B cell (primary cell): ENCODE measurements at regions of chr9 and their contacts with region 1.

Region 1: GRCh38 chr9:27394154-27394825 is 97.3 kb upstream of the EQTN start:
- DNase-seq: no peak
- ATAC-seq: no peak
- H3K4me3 ChIP-seq: no peak overlapping the region
- H3K4me3 Mint-ChIP-seq: no peak overlapping the region
- H3K27ac ChIP-seq: peak overlapping the region; percentile 28 to 68
- H3K27ac Mint-ChIP-seq: peak overlapping the region; percentile 34
- H3K4me1 ChIP-seq: peaks cover 51 to 58% of the 10 kb centered on the region in 2 donors
- H3K4me1 Mint-ChIP-seq: peaks cover 71% of the 10 kb centered on the region
- H3K27me3 ChIP-seq: no peaks in the 10 kb centered on the region
- H3K27me3 Mint-ChIP-seq: no peaks in the 10 kb centered on the region
- CTCF ChIP-seq: no peak

Region 2: GRCh38 chr9:27340961-27341511 is 53.3 kb before region 1 on chr9:
- CTCF ChIA-PET with region 1: no interaction called
- POLR2A ChIA-PET with region 1: no interaction called
- intact Hi-C with region 1: loop called (anchors 10 kb)
- DNase-seq: no peak
- ATAC-seq: no peak
- H3K4me3 ChIP-seq: no peak overlapping the region
- H3K4me3 Mint-ChIP-seq: no peak overlapping the region
- H3K27ac ChIP-seq: no peak overlapping the region
- H3K27ac Mint-ChIP-seq: no peak overlapping the region
- H3K4me1 ChIP-seq: peaks cover 0 to 15% of the 10 kb centered on the region in 2 donors
- H3K4me1 Mint-ChIP-seq: peaks cover 9% of the 10 kb centered on the region
- H3K27me3 ChIP-seq: no peaks in the 10 kb centered on the region
- H3K27me3 Mint-ChIP-seq: no peaks in the 10 kb centered on the region
- CTCF ChIP-seq: no peak

Region 3: DNA sequence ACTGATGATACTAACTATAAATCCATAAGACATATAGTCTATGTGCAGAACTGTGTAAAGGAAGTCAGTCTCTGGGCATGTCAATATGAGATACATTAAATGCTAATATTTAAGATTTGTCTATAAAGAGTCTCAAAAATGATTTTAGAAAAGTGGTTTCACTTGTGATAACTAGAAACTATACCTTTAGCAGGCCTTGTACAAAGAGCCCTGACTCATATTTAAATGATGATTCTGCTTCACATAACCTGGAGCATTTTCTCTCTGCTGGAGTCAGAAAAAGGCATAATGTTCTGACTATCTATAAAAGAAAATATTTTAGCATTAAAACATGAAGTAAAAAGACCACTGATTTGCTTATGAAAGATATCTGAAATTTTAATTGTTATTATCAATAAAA is 164.0 kb after region 1 on chr9:
- CTCF ChIA-PET with region 1: no interaction called
- POLR2A ChIA-PET with region 1: no interaction called
- intact Hi-C with region 1: no loop called
- DNase-seq: no peak
- ATAC-seq: no peak
- H3K4me3 ChIP-seq: no peak overlapping the region
- H3K4me3 Mint-ChIP-seq: no peak overlapping the region
- H3K27ac ChIP-seq: no peak overlapping the region
- H3K27ac Mint-ChIP-seq: no peak overlapping the region
- H3K4me1 ChIP-seq: peaks cover 0 to 4% of the 10 kb centered on the region in 2 donors
- H3K4me1 Mint-ChIP-seq: peaks cover 4% of the 10 kb centered on the region
- H3K27me3 ChIP-seq: no peaks in the 10 kb centered on the region
- H3K27me3 Mint-ChIP-seq: no peaks in the 10 kb centered on the region
- CTCF ChIP-seq: no peak